ENCODE measurements at regions of chr7 and their contacts with region 1.

Region 1: DNA sequence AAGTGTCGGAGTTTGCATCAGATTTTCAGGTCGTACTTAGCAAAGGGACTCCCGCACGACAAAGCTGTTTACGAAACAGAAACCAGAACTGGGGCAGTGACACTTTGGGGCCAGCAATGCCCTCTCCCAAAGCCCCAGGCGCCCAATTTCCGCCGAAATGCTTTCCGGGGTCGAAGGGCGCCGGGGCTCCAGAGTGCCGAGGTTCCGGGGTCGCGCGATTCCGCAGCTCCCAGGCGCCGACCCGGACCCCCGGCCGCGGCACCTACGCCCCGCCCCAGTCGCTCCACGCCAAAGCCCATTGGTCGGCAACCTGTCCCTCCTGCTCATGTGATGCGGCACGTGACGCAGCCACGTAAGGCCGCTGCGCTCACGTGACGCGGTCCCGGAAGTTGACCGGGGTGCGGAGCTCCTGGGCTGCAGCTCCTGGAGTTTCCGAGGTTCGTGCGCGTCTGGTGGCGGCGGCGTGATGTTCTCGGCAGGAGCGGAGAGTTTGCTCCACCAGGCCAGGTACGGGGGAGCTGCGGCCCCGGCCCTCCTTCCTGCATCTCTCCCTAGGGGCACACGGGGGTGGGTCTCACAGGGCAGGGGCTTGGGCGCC is at the start of gene AP5Z1:
- DNase-seq: peak; percentile 93
- H3K4me3 Mint-ChIP-seq: peak within 1 kb of the TSS; percentile 99
- H3K27ac Mint-ChIP-seq: peak within 1 kb of the TSS; percentile 98
- H3K4me1 Mint-ChIP-seq: peaks cover 15% of the 10 kb centered on the region
- H3K27me3 Mint-ChIP-seq: no peaks in the 10 kb centered on the region
- CTCF ChIP-seq: no peak
- total RNA-seq, gene AP5Z1: 26.5 and 35.0 TPM in 2 replicates

Region 2: GRCh38 chr7:4681886-4682620 is 93.3 kb before region 1 on chr7 and contains the start of gene FOXK1:
- CTCF ChIA-PET with region 1: no interaction called
- POLR2A ChIA-PET with region 1: interaction called, 60 read pairs
- intact Hi-C with region 1: no loop called
- DNase-seq: peak; percentile 64
- H3K4me3 Mint-ChIP-seq: peak within 1 kb of the TSS; percentile 83
- H3K27ac Mint-ChIP-seq: peak within 1 kb of the TSS; percentile 96
- H3K4me1 Mint-ChIP-seq: peaks cover 19% of the 10 kb centered on the region
- H3K27me3 Mint-ChIP-seq: no peaks in the 10 kb centered on the region
- CTCF ChIP-seq: no peak
- total RNA-seq, gene FOXK1: 37.7 and 43.8 TPM in 2 replicates

Region 3: GRCh38 chr7:4715410-4715776 is 60.0 kb before region 1 on chr7:
- CTCF ChIA-PET with region 1: interaction called, 5 read pairs
- POLR2A ChIA-PET with region 1: interaction called, 10 read pairs
- intact Hi-C with region 1: no loop called
- DNase-seq: peak; percentile 96
- H3K4me3 Mint-ChIP-seq: peak overlapping the region; percentile 56
- H3K27ac Mint-ChIP-seq: peak overlapping the region; percentile 20
- H3K4me1 Mint-ChIP-seq: peaks cover 20% of the 10 kb centered on the region
- H3K27me3 Mint-ChIP-seq: no peaks in the 10 kb centered on the region
- CTCF ChIP-seq: no peak

Region 4: DNA sequence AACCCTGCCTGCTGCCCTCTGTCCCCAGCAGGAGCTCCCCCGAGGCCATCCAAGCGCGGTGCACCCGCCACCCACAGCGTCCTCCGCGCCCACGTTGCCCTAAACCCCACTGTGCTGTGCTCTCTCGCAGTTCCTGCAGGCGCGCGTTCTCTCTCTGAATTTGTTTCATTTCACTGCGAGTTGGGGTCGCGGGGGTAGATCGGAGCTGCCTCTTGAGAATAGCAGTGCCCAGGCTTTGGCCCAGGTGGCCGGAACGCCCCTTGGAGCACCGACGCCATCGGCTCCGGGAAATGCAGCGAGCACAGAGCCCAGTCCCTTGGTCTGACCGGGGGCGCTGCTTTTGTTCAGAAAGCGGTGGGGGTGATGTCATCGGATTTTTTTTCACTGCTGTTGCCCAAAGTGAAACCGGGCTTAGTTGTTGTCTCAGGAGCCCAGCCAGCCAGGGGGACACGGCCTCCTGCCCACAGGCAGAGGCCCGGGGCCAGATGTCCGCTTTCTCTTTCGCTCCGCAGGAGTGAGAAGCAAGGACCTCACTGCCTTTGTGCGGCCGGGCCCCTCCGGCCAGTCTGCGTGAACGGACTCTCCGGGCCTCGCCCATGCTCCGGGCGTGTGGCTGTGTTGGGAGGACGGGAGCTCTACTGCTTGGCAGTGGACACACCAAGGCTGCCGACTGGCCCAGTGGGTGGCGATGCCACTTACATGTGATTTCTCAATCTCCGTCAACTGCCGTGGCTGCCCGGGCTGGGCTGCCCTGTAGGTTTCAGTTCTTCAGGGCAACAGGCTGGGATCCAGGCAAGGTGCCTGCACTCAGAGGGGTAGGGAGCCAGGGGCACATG is 50.1 kb before region 1 on chr7:
- CTCF ChIA-PET with region 1: interaction called, 3 read pairs
- POLR2A ChIA-PET with region 1: interaction called, 16 read pairs
- intact Hi-C with region 1: no loop called
- DNase-seq: peak; percentile 84
- H3K4me3 Mint-ChIP-seq: peak overlapping the region; percentile 87
- H3K27ac Mint-ChIP-seq: peak overlapping the region; percentile 95
- H3K4me1 Mint-ChIP-seq: peaks cover 21% of the 10 kb centered on the region
- H3K27me3 Mint-ChIP-seq: no peaks in the 10 kb centered on the region
- CTCF ChIP-seq: no peak

Region 5: GRCh38 chr7:4744391-4745264 is 30.7 kb before region 1 on chr7:
- CTCF ChIA-PET with region 1: no interaction called
- POLR2A ChIA-PET with region 1: interaction called, 44 read pairs
- intact Hi-C with region 1: no loop called
- DNase-seq: peak; percentile 99
- H3K4me3 Mint-ChIP-seq: peak overlapping the region; percentile 73
- H3K27ac Mint-ChIP-seq: peak overlapping the region; percentile 97
- H3K4me1 Mint-ChIP-seq: peaks cover 4% of the 10 kb centered on the region
- H3K27me3 Mint-ChIP-seq: no peaks in the 10 kb centered on the region
- CTCF ChIP-seq: no peak